ENCODE measurements at regions of chr2 and their contacts with region 1.

Region 1: DNA sequence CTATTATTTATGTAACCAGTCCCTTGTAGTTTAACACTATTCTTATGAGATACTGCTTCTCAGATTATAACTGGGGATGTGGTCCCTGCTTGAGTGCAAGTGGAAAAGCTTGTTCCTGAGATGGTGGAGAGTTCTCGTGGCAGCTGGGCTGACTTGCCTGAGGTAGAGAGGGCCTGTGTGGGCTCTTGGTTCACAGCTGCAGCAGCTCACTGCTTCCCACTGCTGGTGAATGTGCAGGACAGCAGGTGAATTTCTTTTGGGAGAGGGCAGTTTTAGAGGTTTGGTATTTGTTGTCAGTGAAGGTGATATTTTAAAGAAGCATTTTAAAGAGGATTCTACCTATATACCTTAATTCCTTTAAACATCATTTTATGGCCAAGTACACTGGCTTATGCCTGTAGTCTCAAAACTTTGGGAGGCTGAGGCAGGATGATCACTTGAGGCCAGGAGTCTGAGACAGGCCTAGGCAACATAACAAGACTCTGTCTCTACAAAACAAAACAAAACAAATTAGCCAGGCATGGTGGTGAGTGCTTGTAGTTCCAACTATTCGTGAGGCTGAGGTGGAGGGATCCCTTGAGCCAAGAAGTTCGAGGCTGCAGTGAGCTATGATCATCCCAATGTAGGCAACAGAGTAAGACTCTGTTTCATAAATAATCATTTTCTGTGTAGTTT is 94.8 kb downstream of the MTA3 start:
- DNase-seq: peak; percentile 83
- H3K4me3 ChIP-seq: no peak overlapping the region
- H3K27ac ChIP-seq: no peak overlapping the region
- H3K4me1 ChIP-seq: peaks cover 9% of the 10 kb centered on the region
- CTCF ChIP-seq: peak; percentile 99

Region 2: DNA sequence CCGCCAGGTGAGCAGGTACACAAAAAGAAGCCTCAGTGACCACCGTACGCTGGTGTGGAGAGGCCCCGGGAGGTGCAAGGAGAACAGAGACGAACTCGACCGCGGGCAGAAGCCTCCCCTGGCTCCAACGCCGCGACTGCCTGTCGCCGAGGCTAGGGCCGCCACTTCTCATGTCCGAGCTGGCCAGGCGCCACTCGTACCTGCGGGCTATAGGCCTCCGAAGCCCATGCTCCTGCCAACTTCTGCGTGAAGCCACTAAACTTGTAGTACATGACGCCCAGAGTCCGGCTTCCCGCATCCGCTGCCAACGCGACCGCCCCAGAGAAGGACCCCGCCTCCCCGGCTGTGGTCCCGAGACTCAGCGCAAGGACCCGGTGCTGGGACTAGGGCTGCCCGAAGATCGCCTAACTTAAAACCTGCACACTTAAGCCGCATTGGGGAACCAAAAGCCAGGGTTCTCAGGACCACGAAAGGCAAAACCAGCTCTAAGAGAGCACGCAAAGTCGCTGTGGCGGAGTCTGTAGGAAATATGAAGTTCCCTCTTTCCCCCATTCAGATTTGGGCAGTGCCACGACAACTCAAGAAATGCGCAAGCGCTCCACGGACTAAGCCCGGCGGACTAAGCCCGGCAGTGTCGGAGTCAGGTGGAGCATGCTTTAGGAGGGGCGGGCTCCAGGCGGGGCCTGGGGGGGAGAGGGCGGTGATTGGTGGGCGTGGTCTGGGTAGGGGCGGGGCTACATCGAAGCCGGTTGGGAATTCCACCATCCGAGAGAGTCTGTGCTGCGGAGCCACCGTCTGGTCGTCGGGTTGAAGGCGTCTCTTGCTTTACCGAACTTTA is 302.1 kb before region 1 on chr2 and contains the start of gene COX7A2L:
- CTCF ChIA-PET with region 1: no interaction called
- POLR2A ChIA-PET with region 1: no interaction called
- intact Hi-C with region 1: loop called (anchors 10 kb)
- DNase-seq: peak; percentile 97
- H3K4me3 ChIP-seq: peak within 1 kb of the TSS; percentile 96
- H3K27ac ChIP-seq: peak within 1 kb of the TSS; percentile 79
- H3K4me1 ChIP-seq: peaks cover 27% of the 10 kb centered on the region
- CTCF ChIP-seq: peak; percentile 70
- total RNA-seq, gene COX7A2L: 121 and 130 TPM in 2 replicates

Region 3: GRCh38 chr2:42480402-42480801 is 182.8 kb before region 1 on chr2:
- CTCF ChIA-PET with region 1: no interaction called
- POLR2A ChIA-PET with region 1: no interaction called
- intact Hi-C with region 1: no loop called
- DNase-seq: no peak
- H3K4me3 ChIP-seq: no peak overlapping the region
- H3K27ac ChIP-seq: no peak overlapping the region
- H3K4me1 ChIP-seq: no peaks in the 10 kb centered on the region
- CTCF ChIP-seq: no peak

Region 4: GRCh38 chr2:42513257-42513918 is 149.9 kb before region 1 on chr2:
- CTCF ChIA-PET with region 1: no interaction called
- POLR2A ChIA-PET with region 1: no interaction called
- intact Hi-C with region 1: loop called (anchors 5 kb)
- DNase-seq: peak; percentile 50
- H3K4me3 ChIP-seq: no peak overlapping the region
- H3K27ac ChIP-seq: no peak overlapping the region
- H3K4me1 ChIP-seq: peaks cover 14% of the 10 kb centered on the region
- CTCF ChIP-seq: peak; percentile 84

Measured in OCI-LY7 (cell line).